ENCODE measurements at regions of chr7 and their contacts with region 1.

Region 1: DNA sequence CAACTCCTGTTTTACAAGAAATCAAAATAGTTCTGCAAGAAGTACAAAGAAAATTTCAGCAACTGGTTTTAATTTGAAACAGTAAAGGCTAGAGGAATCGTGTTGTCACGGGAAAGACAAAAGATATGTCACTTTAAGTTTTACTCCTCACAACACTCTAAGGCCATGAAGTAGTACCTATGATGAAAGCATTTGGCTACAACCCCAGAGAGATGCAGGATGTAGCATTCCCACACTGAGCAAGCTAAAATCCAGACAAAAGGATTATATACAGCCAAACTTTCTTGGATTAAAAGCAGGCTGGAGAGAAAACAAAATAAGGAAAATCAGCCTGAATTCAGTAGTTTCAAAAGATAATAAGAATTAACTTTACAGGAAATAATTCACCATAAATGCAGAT is 245.5 kb upstream of the STEAP1 start:
- DNase-seq: no peak
- ATAC-seq: no peak
- H3K4me3 ChIP-seq: no peak overlapping the region
- H3K4me3 Mint-ChIP-seq: no peak overlapping the region
- H3K27ac ChIP-seq: no peak overlapping the region
- H3K27ac Mint-ChIP-seq: no peak overlapping the region
- H3K4me1 ChIP-seq: no peaks in the 10 kb centered on the region
- H3K4me1 Mint-ChIP-seq: no peaks in the 10 kb centered on the region
- H3K27me3 ChIP-seq: no peaks in the 10 kb centered on the region
- H3K27me3 Mint-ChIP-seq: no peaks in the 10 kb centered on the region
- CTCF ChIP-seq: no peak

Region 2: DNA sequence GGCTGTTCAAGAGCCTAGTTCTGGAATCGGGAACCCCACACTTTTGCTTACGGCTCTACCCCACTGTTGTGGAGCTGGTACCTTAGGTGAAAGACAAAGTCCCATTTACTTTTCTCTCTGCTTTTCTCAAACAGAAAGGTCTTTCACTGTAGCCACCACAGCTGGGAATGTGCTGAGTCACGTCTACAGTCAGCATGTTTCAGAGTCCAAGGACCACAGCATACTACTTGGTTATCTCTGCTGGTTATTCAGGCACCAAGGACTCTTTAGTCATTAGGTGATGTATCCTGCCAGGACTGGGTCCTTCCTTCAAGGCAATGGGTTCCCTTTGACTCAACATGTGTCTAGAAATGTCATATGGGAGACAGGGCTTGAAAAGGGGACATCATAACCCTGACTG is 21.2 kb before region 1 on chr7:
- CTCF ChIA-PET with region 1: no interaction called
- POLR2A ChIA-PET with region 1: no interaction called
- intact Hi-C with region 1: loop called (anchors 2 kb)
- DNase-seq: no peak
- ATAC-seq: no peak
- H3K4me3 ChIP-seq: no peak overlapping the region
- H3K4me3 Mint-ChIP-seq: no peak overlapping the region
- H3K27ac ChIP-seq: no peak overlapping the region
- H3K27ac Mint-ChIP-seq: no peak overlapping the region
- H3K4me1 ChIP-seq: no peaks in the 10 kb centered on the region
- H3K4me1 Mint-ChIP-seq: no peaks in the 10 kb centered on the region
- H3K27me3 ChIP-seq: no peaks in the 10 kb centered on the region
- H3K27me3 Mint-ChIP-seq: no peaks in the 10 kb centered on the region
- CTCF ChIP-seq: no peak

Measured in B cell (primary cell).